ENCODE measurements at regions of chr10 and their contacts with region 1.

Region 1: DNA sequence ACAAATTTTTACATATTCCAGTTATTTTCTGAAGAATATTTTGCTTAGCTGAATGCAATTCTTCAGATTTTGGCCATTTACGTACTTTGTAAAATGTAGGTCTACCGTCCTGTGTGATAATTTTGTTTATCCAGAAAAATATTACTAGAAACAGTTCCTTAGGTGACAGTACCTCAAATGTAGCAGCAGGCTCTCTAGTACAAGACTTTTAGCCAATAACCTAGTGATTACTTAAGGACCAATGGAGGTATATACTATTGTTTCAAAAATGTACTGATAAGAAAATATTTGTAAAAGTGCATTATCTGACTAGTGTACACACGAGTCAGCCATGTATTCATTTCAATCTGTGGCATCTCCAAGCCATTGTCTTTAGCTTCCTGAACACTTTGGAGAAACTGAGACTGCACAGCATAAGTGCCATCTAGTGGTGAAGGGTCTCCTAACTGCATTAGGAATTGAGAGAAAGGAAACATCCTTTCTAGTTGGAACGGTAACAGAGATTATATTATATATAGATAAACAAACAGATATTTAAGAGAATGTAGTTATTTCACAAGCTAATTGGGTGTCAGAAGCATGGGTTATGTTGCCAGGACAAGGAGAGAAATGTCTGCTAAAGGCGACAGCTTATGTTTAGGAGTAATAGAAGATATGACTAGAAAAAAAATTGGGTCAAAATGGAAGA is 23.7 kb downstream of the RTKN2 start:
- DNase-seq: peak; percentile 51
- H3K4me3 Mint-ChIP-seq: no peak overlapping the region
- H3K27ac Mint-ChIP-seq: peak overlapping the region; percentile 9
- H3K4me1 Mint-ChIP-seq: peaks cover 19% of the 10 kb centered on the region
- H3K27me3 Mint-ChIP-seq: no peaks in the 10 kb centered on the region
- CTCF ChIP-seq: peak; percentile 77

Region 2: GRCh38 chr10:61750929-61751471 is 493.9 kb before region 1 on chr10:
- CTCF ChIA-PET with region 1: interaction called, 5 read pairs
- intact Hi-C with region 1: loop called (anchors 2 kb)
- DNase-seq: peak; percentile 90
- H3K4me3 Mint-ChIP-seq: peak overlapping the region; percentile 58
- H3K27ac Mint-ChIP-seq: peak overlapping the region; percentile 96
- H3K4me1 Mint-ChIP-seq: peaks cover 54% of the 10 kb centered on the region
- H3K27me3 Mint-ChIP-seq: no peaks in the 10 kb centered on the region
- CTCF ChIP-seq: peak; percentile 85

Region 3: DNA sequence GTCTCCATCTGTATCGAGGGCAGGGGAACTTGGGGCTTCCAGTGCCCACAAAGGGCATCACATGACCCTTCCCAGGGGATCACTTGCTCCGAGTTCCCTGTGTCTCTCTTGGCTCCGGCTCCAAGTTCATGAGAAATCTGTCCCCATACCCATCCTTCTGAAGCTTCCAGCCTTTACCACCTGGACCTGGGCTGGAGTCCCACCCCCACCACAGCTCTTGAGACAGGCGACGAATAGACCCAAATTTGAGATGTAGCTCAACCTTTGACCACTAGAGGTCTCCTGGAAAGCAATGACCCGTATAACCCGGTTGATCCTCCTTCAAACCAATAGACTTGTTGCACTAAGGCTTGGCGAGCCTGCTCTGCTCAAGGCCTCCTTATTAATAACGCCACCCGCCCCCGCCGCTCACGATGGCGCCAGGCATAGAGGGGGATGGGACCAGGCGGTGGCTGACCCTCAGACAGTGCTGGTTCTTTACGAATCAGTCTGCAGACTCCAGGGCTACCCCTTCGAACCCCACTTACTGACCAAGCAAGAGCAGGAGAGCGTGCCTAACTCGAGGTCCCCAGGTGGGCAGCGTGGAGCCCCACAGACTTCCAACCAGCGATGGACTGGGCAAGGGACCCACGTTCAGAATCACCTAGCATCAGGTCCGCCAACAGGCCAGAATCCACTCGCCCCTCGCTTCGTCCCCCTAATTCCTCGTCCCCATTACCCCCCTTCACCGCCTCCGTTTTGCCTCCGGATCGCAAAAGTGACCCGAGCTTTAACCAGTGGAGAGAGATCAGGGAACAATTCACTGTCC is 347.9 kb before region 1 on chr10:
- CTCF ChIA-PET with region 1: interaction called, 5 read pairs
- intact Hi-C with region 1: loop called (anchors 1 kb)
- DNase-seq: peak; percentile 71
- H3K4me3 Mint-ChIP-seq: peak overlapping the region; percentile 42
- H3K27ac Mint-ChIP-seq: no peak overlapping the region
- H3K4me1 Mint-ChIP-seq: peaks cover 37% of the 10 kb centered on the region
- H3K27me3 Mint-ChIP-seq: no peaks in the 10 kb centered on the region
- CTCF ChIP-seq: peak; percentile 75

Region 4: DNA sequence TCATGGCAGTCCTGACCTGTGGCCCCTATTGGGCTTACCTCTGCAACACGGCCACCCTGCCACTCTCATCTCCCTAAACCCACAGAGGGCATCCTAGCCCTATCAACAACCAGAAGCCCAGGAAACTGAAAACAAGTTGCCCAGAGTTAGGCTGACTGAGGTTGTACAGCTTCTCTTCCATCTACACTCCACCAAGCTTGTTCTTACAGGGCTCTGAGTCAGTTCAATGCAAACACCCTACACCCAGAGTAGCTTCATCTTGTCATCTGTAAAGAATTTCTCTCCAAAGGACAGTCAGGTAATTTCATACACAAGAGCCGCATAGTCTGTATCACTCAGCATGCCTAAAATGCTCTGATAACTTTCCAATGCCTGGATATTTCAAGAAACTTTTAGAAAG is 168.0 kb before region 1 on chr10:
- CTCF ChIA-PET with region 1: interaction called, 6 read pairs
- intact Hi-C with region 1: loop called (anchors 2 kb)
- DNase-seq: peak; percentile 29
- H3K4me3 Mint-ChIP-seq: peak overlapping the region; percentile 19
- H3K27ac Mint-ChIP-seq: peak overlapping the region; percentile 45
- H3K4me1 Mint-ChIP-seq: peaks cover 26% of the 10 kb centered on the region
- H3K27me3 Mint-ChIP-seq: no peaks in the 10 kb centered on the region
- CTCF ChIP-seq: no peak

Region 5: DNA sequence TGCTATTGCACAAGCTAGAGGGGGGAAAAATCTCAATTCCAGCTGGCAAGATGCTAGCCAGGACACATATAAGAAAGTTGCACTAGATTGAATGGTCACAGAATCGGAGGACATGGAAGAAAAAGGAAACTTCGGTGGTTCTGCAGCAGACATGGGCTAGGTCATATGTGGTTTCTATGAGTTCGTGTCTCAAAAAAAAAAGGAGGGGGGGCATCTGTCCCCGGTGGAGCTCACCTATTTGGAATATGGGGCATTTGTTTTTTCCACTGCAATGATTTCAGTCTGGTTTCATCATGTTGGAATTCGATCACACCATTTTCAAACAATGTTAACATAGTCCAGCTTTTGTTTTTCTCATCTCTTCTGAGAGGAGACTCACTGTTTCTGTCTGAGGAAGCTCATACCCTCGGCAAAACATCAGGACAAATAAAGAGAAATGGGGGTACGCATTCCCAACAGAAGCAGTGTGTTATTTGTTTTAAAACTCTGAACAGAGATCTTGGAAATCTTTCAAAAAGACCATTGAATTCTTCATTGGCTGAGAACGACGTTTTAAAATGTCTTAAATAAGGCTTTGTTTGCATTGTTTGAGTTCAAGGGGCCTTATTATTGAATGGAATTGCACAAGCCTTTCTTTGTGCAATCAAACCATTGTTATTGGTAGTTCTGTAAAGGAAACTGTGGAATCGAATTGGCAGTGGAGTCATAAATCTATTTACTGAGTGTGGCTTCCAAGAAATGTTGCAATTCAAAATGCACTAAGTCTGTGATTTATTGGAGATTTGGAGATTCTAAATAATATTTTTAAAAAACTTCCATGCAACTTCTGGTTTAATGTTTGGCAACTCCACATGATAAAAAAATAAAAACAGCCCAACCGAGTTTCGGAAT is 149.5 kb before region 1 on chr10:
- CTCF ChIA-PET with region 1: no interaction called
- intact Hi-C with region 1: loop called (anchors 5 kb)
- DNase-seq: peak; percentile 54
- H3K4me3 Mint-ChIP-seq: peak overlapping the region; percentile 67
- H3K27ac Mint-ChIP-seq: peak overlapping the region; percentile 100
- H3K4me1 Mint-ChIP-seq: peaks cover 64% of the 10 kb centered on the region
- H3K27me3 Mint-ChIP-seq: no peaks in the 10 kb centered on the region
- CTCF ChIP-seq: no peak

Measured in Calu3 (cell line).